Left cardiac atrium (tissue), 4 donors: ENCODE measurements at regions of chr13 and their contacts with region 1.

Region 1: GRCh38 chr13:74056801-74057542 is 77.2 kb downstream of the KLF12 start:
- DNase-seq: peak; percentile 76
- ATAC-seq: peak; percentile 55 to 89

Region 2: GRCh38 chr13:73870970-73871935 is 185.7 kb before region 1 on chr13:
- intact Hi-C with region 1: loop called in 1 of 2 experiments (anchors 10 kb)
- DNase-seq: peak; percentile 64
- ATAC-seq: peak in 1 of 2 donors; percentile 94